Mammary epithelial cell (primary cell): ENCODE measurements at regions of chr14 and their contacts with region 1.

Region 1: DNA sequence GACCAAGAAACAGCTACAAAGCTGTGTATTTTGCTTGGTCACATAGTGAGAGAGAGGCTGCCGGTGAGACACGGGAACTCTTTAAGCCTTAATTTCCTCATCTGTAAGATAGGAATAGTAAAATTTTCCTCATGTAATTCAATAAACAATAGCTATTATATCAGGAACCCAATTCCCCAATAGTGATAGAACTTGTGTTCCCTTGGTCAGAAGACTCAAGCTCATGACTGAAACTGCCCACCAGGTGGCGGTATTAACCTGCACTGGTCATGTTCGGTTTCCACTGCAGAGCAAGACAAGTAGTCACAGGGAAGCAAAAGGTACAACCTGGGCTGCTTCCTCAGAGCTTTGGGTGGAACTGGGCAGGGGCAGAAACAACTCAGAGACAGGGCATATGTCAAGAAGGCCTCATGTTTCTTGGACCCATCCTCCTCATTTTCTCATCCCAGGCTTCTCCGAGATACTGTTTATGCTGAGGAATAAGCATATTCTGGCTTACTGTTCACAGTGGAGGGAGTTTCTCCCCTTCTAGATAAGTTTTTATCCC is 4.2 kb upstream of the AJUBA start:
- DNase-seq: peak; percentile 70
- H3K4me3 ChIP-seq: no peak overlapping the region
- H3K27ac ChIP-seq: no peak overlapping the region
- H3K4me1 ChIP-seq: no peaks in the 10 kb centered on the region
- H3K27me3 ChIP-seq: no peaks in the 10 kb centered on the region
- CTCF ChIP-seq: peak; percentile 92 to 93

Region 2: GRCh38 chr14:22614224-22614799 is 372.3 kb before region 1 on chr14:
- CTCF ChIA-PET with region 1: no interaction called
- dilution Hi-C with region 1: no loop called
- in situ Hi-C with region 1: no loop called
- intact Hi-C with region 1: no loop called
- DNase-seq: peak; percentile 91
- H3K4me3 ChIP-seq: no peak overlapping the region
- H3K27ac ChIP-seq: peak overlapping the region; percentile 71
- H3K4me1 ChIP-seq: peaks cover 18% of the 10 kb centered on the region
- H3K27me3 ChIP-seq: no peaks in the 10 kb centered on the region
- CTCF ChIP-seq: no peak

Region 3: GRCh38 chr14:22836301-22837113 is 150.1 kb before region 1 on chr14 and contains the start of gene MMP14:
- CTCF ChIA-PET with region 1: no interaction called
- dilution Hi-C with region 1: no loop called
- in situ Hi-C with region 1: no loop called
- intact Hi-C with region 1: loop called (anchors 5 kb)
- DNase-seq: peak; percentile 86
- H3K4me3 ChIP-seq: peak within 1 kb of the TSS; percentile 84 to 94 (median 86)
- H3K27ac ChIP-seq: peak within 1 kb of the TSS; percentile 86
- H3K4me1 ChIP-seq: peaks cover 24% of the 10 kb centered on the region
- H3K27me3 ChIP-seq: no peaks in the 10 kb centered on the region
- CTCF ChIP-seq: peak in 1 of 2 donors; percentile 57
- total RNA-seq, gene MMP14: 525 to 766 TPM

Region 4: GRCh38 chr14:22852940-22853767 is 133.4 kb before region 1 on chr14:
- CTCF ChIA-PET with region 1: no interaction called
- dilution Hi-C with region 1: no loop called
- in situ Hi-C with region 1: no loop called
- intact Hi-C with region 1: no loop called
- DNase-seq: peak; percentile 80
- H3K4me3 ChIP-seq: peak overlapping the region in 2 of 3 experiments; percentile 7 to 52
- H3K27ac ChIP-seq: peak overlapping the region; percentile 90
- H3K4me1 ChIP-seq: peaks cover 54% of the 10 kb centered on the region
- H3K27me3 ChIP-seq: no peaks in the 10 kb centered on the region
- CTCF ChIP-seq: peak; percentile 91 to 93

Region 5: DNA sequence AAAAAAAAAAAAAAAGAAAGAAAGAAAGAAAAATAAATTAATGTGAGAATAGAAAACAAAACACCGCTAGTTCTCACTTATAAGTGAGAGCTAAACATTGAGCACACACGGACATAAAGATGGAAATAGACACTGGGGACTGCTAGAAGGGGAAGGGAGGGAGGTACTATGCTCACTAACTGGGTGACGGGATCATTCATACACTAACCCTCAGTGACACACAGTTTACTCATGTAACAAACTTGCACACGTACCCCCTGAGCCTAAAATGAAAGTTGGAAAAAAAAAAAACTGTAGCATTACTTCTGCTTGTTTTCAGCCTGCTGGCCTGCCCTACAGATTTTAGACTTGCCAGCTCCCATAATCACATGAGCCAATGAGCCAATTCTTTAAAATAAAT is 46.9 kb before region 1 on chr14:
- CTCF ChIA-PET with region 1: no interaction called
- dilution Hi-C with region 1: no loop called
- in situ Hi-C with region 1: no loop called
- intact Hi-C with region 1: loop called (anchors 1 kb)
- DNase-seq: no peak
- H3K4me3 ChIP-seq: no peak overlapping the region
- H3K27ac ChIP-seq: no peak overlapping the region
- H3K4me1 ChIP-seq: no peaks in the 10 kb centered on the region
- H3K27me3 ChIP-seq: no peaks in the 10 kb centered on the region
- CTCF ChIP-seq: no peak

Region 6: DNA sequence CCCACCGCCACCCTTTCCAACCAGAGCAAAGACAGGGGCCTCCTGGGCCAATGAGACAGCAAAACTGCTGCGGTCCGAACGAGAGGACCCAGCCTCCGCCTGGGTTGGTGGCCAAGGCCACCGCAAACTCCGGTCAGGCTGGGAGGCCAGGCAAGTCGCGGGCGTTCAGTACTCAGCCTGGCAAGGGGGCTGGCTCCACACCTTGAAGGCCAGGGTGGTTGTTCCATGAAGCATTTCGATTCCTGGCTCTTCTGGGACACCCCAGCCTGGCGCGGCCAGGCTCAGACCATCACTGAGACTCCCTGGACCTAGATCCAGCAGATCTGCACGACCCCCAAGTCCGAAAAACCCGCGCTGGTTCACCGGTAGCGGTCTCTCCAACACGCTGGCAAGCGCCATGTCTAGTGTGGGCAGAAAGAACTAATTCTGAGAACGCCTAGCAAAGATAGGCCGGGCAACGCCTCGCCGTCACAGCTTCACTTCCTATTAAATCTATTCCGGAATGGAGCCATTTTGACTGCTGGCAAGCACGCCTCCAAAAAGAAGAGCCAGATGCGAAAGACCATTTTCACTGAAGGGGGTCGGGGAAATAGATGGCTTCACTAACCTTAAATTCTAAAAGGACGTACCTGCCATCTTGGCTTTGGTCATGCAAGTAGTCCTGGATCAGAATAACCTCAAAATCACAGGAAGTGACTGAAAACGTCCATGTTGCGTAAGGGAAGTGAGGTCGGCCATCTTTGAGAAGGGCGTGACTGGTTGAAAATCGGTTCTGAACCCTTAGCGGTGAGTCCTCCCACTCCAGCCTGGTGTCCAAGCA is 48.1 kb after region 1 on chr14 and contains the start of gene PSMB5:
- CTCF ChIA-PET with region 1: interaction called, 12 read pairs
- dilution Hi-C with region 1: no loop called
- in situ Hi-C with region 1: no loop called
- intact Hi-C with region 1: no loop called
- DNase-seq: peak; percentile 93
- H3K4me3 ChIP-seq: peak within 1 kb of the TSS; percentile 82 to 95 (median 88)
- H3K27ac ChIP-seq: peak within 1 kb of the TSS; percentile 83
- H3K4me1 ChIP-seq: peaks cover 7% of the 10 kb centered on the region
- H3K27me3 ChIP-seq: no peaks in the 10 kb centered on the region
- CTCF ChIP-seq: no peak
- total RNA-seq, gene PSMB5: 145 to 152 TPM

Region 7: GRCh38 chr14:23057757-23058653 is 71.4 kb after region 1 on chr14:
- CTCF ChIA-PET with region 1: interaction called, 12 read pairs
- dilution Hi-C with region 1: no loop called
- in situ Hi-C with region 1: loop called (anchors 5 kb)
- intact Hi-C with region 1: loop called (anchors 1 kb)
- DNase-seq: peak; percentile 74
- H3K4me3 ChIP-seq: peak overlapping the region; percentile 50 to 65 (median 55)
- H3K27ac ChIP-seq: no peak overlapping the region
- H3K4me1 ChIP-seq: peaks cover 31% of the 10 kb centered on the region
- H3K27me3 ChIP-seq: no peaks in the 10 kb centered on the region
- CTCF ChIP-seq: peak; percentile 82 to 93

Region 8: DNA sequence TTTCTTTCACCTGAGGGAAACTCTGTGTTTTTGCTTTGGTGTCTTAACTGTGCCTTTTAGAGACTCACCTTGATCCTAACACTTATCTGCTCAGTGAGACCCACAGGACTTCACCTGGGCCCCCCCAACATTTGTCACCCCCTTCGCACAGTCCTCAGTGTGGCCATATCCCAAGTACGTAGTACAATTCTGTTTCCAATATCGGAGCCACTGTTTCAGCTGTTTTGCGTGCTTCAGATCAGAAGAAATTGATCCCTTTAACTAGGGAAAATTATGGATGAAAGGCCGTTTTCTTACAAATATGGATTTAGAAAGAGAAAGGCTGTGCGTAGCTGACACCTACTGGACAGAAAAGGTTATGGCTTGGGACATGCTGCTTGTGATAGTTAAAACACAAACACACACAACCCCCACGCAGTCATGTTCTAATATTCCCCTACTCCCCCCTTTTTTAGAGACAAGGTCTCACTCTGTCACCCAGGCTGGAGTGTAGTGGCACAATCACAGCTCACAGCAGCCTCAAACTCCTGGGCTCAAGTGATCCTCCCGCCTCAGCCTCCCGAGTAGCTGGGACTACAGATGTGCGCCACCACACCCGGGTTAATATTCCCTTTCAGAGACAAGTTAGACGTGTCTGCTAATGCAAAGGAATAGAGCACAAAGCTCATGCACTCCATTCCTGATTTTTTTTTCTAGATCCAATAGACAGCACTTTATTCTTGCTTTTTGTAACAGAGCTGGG is 200.5 kb after region 1 on chr14:
- CTCF ChIA-PET with region 1: no interaction called
- dilution Hi-C with region 1: loop called (anchors 25 kb)
- in situ Hi-C with region 1: no loop called
- intact Hi-C with region 1: loop called (anchors 10 kb)
- DNase-seq: peak; percentile 44
- H3K4me3 ChIP-seq: no peak overlapping the region
- H3K27ac ChIP-seq: no peak overlapping the region
- H3K4me1 ChIP-seq: peaks cover 8% of the 10 kb centered on the region
- H3K27me3 ChIP-seq: no peaks in the 10 kb centered on the region
- CTCF ChIP-seq: peak; percentile 85 to 86